Activated CD4-positive, alpha-beta T cell treated with anti-CD3 and anti-CD28 coated beads for 36 hours (primary cell): ENCODE measurements at regions of chr3 and their contacts with region 1.

Region 1: DNA sequence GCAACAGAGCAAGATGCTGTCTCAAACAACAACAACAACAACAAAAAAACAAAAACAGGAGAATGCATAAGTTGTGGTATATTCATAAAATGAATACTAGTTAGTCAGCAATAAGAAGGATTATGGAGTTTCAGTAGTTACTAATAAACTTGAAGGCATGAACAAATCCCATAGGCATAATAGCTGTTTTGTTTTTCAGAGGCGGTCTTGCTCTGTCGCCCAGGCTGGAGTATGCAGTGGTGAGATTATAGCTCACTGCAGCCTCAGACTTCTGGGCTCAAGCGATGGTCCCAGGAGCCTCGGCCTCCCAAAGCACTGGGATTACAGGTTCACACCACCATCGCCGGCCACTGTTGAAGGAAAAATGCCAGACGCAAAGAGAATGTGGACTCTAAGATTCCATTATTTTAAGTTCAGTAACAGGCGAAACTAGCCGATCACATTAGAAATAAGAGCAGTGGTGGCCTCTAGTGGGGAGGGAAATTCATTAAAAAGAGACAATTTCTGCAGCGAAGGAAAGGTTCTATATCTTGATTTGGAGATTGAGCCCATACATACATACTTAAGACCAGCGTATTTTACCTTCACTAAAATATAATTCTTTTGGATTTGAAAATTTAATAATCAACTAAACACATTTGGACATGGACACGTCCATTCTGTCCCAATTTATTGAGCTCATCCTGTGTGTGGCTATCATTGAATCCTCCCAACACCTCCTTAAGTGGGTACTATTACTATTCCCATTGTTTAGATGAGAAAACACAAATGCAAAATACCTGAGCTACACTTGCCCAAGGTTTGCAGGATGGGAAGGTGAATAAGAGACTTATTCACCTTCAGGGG is 27.4 kb upstream of the HDAC11 start:
- DNase-seq: peak; percentile 56
- ATAC-seq: no peak
- H3K4me3 Mint-ChIP-seq: peak overlapping the region; percentile 70
- H3K27ac Mint-ChIP-seq: peak overlapping the region; percentile 89
- H3K4me1 Mint-ChIP-seq: peaks cover 14% of the 10 kb centered on the region
- H3K27me3 Mint-ChIP-seq: no peaks in the 10 kb centered on the region

Region 2: DNA sequence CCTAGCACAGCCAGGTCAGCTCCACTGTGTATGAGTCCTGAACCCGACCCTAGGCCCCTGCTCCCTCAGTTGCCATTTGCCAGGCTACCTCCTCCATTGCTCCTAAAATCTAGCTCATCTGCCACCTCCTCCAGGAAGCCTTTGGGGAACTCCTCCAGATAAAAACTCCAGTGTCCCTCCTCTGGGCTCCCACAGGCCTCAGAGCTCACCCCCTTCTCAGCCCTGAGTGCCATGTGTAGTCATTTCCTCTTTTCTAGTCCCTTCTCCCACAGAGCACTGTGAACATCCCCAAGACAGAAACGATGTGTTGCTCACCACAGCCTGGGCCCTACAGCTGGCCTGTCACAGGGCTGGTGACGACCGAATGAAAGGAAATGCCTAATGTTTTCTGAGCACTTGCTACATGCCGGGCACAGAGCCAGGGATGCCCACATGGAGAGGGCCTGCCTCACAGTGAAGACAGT is 440.5 kb before region 1 on chr3:
- CTCF ChIA-PET with region 1: no interaction called
- POLR2A ChIA-PET with region 1: no interaction called
- intact Hi-C with region 1: loop called in 1 of 2 experiments (anchors 2 kb)
- DNase-seq: peak; percentile 86
- ATAC-seq: peak; percentile 57
- H3K4me3 Mint-ChIP-seq: peak overlapping the region; percentile 72
- H3K27ac Mint-ChIP-seq: peak overlapping the region; percentile 98
- H3K4me1 Mint-ChIP-seq: peaks cover 85% of the 10 kb centered on the region
- H3K27me3 Mint-ChIP-seq: no peaks in the 10 kb centered on the region

Region 3: GRCh38 chr3:13229273-13229949 is 223.3 kb before region 1 on chr3:
- CTCF ChIA-PET with region 1: interaction called, 4 read pairs
- POLR2A ChIA-PET with region 1: no interaction called
- intact Hi-C with region 1: loop called in 1 of 2 experiments (anchors 5 kb)
- DNase-seq: peak; percentile 36
- ATAC-seq: peak; percentile 80
- H3K4me3 Mint-ChIP-seq: no peak overlapping the region
- H3K27ac Mint-ChIP-seq: no peak overlapping the region
- H3K4me1 Mint-ChIP-seq: peaks cover 9% of the 10 kb centered on the region
- H3K27me3 Mint-ChIP-seq: peaks cover 5% of the 10 kb centered on the region

Region 4: GRCh38 chr3:13391308-13391707 is 61.4 kb before region 1 on chr3:
- CTCF ChIA-PET with region 1: interaction called, 23 read pairs
- POLR2A ChIA-PET with region 1: interaction called, 5 read pairs
- intact Hi-C with region 1: loop called (anchors 1 to 2 kb)
- DNase-seq: peak; percentile 41
- ATAC-seq: no peak
- H3K4me3 Mint-ChIP-seq: no peak overlapping the region
- H3K27ac Mint-ChIP-seq: peak overlapping the region; percentile 37
- H3K4me1 Mint-ChIP-seq: peaks cover 10% of the 10 kb centered on the region
- H3K27me3 Mint-ChIP-seq: no peaks in the 10 kb centered on the region

Region 5: DNA sequence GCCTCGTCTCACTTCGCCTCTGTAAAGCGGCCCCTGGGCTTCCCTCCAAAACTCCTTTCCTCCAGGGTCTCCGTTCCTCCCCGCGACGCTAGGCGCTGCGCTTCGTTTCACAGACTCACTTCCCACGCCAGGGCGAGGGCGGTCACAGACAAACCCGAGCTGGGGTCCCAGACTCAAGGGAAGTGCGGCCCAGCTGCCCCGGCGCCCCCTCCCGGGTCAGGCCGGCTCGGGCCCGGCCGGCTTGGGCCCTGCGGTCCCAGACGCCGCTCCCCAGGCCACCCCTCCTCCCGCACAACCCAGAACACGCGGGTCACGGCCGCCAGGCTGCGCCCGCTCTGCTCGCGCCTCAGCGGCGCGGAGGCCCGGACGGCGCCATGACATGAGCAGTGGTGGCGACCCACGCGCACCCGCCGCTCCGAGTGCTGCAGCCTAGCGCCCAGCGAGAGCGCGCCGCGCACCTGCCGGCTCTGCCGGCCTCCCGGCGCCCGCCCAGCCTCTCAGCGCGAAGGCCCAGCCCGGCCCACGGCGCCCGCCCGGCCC is 33.1 kb before region 1 on chr3:
- CTCF ChIA-PET with region 1: interaction called, 43 read pairs
- POLR2A ChIA-PET with region 1: interaction called, 7 read pairs
- intact Hi-C with region 1: loop called (anchors 1 kb)
- DNase-seq: peak; percentile 79
- ATAC-seq: peak; percentile 30
- H3K4me3 Mint-ChIP-seq: peak overlapping the region; percentile 77
- H3K27ac Mint-ChIP-seq: peak overlapping the region; percentile 95
- H3K4me1 Mint-ChIP-seq: peaks cover 58% of the 10 kb centered on the region
- H3K27me3 Mint-ChIP-seq: no peaks in the 10 kb centered on the region

Region 6: GRCh38 chr3:13479581-13480339 is 27.0 kb after region 1 on chr3 and contains the start of gene HDAC11:
- CTCF ChIA-PET with region 1: interaction called, 13 read pairs
- POLR2A ChIA-PET with region 1: interaction called, 4 read pairs
- intact Hi-C with region 1: loop called (anchors 1 kb)
- DNase-seq: peak; percentile 99
- ATAC-seq: peak; percentile 96
- H3K4me3 Mint-ChIP-seq: peak within 1 kb of the TSS; percentile 89
- H3K27ac Mint-ChIP-seq: peak within 1 kb of the TSS; percentile 90
- H3K4me1 Mint-ChIP-seq: peaks cover 20% of the 10 kb centered on the region
- H3K27me3 Mint-ChIP-seq: no peaks in the 10 kb centered on the region
- total RNA-seq, gene HDAC11: 3.4 to 4.1 TPM